ENCODE measurements at regions of chr9 and their contacts with region 1.

Region 1: GRCh38 chr9:3721096-3721495 is 195.3 kb upstream of the RFX3 start:
- DNase-seq: no peak
- ATAC-seq: no peak
- H3K4me3 ChIP-seq: no peak overlapping the region
- H3K4me3 Mint-ChIP-seq: no peak overlapping the region
- H3K27ac ChIP-seq: no peak overlapping the region
- H3K27ac Mint-ChIP-seq: no peak overlapping the region
- H3K4me1 ChIP-seq: no peaks in the 10 kb centered on the region
- H3K4me1 Mint-ChIP-seq: no peaks in the 10 kb centered on the region
- H3K27me3 ChIP-seq: peaks cover 0 to 8% of the 10 kb centered on the region in 2 experiments
- H3K27me3 Mint-ChIP-seq: no peaks in the 10 kb centered on the region
- CTCF ChIP-seq: no peak

Region 2: DNA sequence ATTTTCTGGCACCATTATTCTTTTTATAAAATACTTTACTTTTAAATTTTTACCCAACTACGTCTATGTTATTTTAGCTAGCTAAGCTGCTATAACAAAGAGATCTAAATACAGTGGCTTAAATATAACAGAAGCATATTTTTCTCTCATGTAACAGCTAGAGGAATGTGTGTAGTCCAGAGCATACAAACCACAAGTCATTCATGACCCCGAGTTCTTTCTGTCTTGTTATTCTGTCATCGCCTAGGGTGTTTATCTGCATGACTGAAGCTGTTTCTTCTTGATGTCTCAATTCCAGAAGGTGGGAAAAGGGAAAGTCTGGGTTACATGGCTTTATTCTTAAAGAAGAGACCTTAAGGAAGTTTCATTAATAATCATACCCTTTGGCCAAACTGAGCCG is 58.4 kb before region 1 on chr9:
- CTCF ChIA-PET with region 1: no interaction called
- POLR2A ChIA-PET with region 1: no interaction called
- intact Hi-C with region 1: loop called in 1 of 2 experiments (anchors 10 kb)
- DNase-seq: no peak
- ATAC-seq: no peak
- H3K4me3 ChIP-seq: no peak overlapping the region
- H3K4me3 Mint-ChIP-seq: no peak overlapping the region
- H3K27ac ChIP-seq: no peak overlapping the region
- H3K27ac Mint-ChIP-seq: no peak overlapping the region
- H3K4me1 ChIP-seq: no peaks in the 10 kb centered on the region
- H3K4me1 Mint-ChIP-seq: no peaks in the 10 kb centered on the region
- H3K27me3 ChIP-seq: no peaks in the 10 kb centered on the region
- H3K27me3 Mint-ChIP-seq: no peaks in the 10 kb centered on the region
- CTCF ChIP-seq: no peak

Measured in CD4-positive, alpha-beta T cell (primary cell).